Cardiac septum (tissue), 1 donor: ENCODE measurements at regions of chr1 and their contacts with region 1.

Region 1: GRCh38 chr1:16366722-16367257 is at the start of gene SZRD1:
- DNase-seq: peak; percentile 98
- total RNA-seq, gene SZRD1: 101 TPM

Region 2: GRCh38 chr1:16067127-16067768 is 299.5 kb before region 1 on chr1:
- intact Hi-C with region 1: no loop called
- DNase-seq: no peak

Region 3: DNA sequence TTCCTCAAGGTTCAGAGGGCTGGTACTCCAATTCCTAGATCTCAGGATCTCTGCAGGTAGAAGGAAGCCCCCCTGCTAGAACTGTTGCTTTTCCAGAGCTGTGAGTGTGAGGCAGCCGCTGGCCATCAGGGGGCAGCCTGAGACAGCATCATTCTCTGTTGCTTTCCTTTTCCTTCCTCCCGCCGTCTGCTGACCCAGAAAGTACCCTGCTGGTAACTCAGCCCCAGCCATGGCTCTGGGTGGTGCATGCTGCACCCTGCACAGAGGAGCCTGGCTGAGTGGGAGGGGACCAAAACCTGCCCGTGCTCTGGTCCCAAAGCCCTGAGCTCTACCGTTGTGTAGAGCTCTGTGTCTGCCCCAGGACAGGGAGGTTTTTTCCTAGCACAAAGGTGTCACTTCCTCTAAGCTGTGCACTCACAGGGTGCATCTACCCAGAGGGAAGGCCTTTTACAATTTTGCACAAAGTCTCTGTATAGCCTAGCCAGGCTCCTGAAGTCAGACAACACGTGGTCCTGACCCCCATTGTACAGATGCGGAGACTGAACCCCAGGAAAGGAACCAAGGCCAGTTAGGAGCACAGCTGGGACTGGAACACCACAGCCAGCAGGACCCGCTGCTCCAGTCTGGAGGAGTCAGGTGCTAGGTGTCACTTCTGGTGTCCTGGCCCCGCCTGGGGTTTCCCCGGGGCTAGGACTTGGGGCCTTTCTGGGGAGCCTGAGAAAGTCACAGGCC is 287.7 kb before region 1 on chr1:
- intact Hi-C with region 1: loop called (anchors 2 kb)
- DNase-seq: no peak

Region 4: DNA sequence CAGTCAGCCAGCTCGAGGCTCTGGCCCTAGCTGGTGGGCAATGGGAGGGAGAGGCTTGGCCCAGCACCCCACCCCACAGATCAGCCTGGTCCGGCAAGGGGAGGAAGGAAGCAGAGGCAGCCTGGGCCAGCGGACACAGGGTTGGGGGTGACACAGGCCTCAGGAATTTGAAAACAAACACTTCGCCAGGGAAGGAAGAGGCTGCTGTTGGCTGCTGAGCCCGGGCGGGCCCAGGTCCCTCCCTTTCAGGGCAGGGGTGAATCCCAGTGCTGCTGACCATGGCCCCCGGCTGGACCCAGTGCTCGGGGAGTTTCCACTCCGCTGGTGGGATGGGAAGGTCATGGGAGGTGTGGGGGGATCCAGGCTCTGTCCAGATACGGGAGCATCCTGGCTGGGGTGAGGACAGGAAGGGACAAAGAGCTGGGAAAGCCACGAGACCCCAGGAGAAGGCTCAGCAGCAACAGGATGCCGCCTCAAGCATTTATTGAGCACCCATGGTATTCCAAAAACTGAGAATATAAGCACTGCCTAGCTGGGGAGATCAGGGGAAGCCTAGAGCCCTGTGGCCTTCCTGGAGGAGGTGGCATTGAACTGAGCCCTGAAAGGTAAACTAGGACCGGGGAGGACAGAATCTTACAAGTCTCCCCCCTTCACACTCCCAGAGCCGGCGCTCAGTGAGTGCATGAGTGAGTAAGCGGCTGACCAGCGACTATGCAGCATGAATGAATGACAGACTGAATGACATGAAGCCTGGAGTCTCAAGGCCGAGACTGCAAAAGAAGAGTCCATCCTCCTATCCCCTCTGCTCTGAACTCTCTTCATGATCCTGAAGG is 184.7 kb before region 1 on chr1:
- intact Hi-C with region 1: loop called (anchors 5 kb)
- DNase-seq: peak; percentile 92

Region 5: DNA sequence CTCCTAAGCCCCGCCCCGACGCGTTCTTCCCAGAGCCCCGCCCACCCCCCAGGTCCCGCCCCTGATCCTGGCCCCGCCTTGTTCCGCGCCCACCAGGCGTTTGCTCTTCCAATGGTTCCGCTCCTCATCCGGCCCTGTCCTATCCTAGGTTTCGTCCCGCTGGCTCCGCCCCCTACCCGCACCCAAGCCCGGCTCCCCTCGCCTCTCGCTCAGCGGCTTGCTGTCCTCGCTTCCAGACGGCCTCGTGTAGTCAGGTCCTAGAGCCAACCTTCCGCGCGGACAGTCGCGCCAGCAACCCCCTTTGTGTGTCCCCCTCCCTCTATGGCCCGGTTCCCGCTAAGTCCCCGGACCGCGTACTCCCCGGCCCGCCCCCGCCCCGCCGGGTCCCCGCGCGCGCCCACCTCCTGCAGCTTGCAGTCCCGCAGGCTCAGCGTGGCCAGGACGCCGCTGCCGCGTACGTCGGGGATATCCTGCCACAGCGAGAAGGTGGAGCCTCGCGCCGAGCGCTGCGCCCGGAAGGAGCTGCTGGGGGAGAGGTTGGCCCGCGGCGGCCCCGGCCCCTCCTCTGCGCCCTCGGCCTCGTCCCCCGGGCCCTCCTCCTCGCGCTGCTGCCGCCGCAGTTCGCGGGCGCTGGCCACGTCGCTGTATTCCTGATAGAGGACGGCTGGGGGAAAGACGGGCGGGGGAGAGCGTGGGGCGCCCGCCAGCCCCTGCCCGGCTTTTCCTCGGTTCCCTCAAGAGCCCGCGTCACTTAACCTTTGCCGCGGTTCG is 160.1 kb before region 1 on chr1:
- intact Hi-C with region 1: loop called (anchors 5 kb)
- DNase-seq: peak; percentile 97

Region 6: DNA sequence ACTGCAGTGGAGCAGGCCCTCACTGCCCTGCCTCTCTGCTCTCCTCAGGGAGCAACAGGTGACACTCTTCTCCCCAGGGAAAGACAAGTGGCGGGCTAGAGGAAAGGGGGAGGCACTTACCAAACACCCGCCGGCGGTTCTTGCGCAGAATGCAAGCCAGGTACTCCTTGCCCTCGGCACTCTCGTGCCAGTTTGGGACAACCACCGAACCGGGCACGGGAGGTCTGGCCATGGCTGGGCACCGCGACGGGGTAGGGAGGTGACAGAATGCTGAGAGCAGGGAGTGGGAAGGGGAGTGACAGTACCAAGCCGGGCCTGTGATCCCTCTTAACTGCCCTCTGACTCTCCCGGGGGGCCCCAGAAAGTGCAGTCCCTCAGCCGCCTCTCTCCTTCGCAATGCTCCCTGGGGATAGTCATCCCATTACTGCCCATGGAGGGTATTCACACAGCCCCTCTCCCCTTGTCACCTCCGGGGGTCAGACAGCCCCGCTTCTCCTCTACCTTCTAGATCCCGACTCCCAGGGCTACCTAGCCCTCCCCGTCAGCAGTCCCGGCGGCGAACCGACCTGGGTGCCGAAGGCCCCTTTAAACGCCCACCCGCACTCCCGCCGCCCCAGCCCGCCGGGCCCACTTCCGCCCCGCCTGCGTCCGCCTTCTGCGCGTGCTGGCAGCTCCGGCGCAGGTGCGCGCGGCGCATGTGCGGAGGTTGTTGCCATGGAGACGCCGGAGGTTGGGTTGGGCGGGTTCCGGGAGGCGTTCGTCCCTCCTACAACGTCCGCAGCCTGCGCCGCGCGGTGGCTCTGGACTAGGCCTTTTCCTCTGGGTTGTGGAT is 130.1 kb before region 1 on chr1 and contains the start of gene CPLANE2:
- intact Hi-C with region 1: loop called (anchors 2 kb)
- DNase-seq: peak; percentile 97
- total RNA-seq, gene CPLANE2: 10.6 TPM

Region 7: GRCh38 chr1:16351994-16352841 is 14.6 kb before region 1 on chr1 and contains the start of gene FBXO42:
- intact Hi-C with region 1: loop called (anchors 2 kb)
- DNase-seq: peak; percentile 96
- total RNA-seq, gene FBXO42: 14.1 TPM

Region 8: DNA sequence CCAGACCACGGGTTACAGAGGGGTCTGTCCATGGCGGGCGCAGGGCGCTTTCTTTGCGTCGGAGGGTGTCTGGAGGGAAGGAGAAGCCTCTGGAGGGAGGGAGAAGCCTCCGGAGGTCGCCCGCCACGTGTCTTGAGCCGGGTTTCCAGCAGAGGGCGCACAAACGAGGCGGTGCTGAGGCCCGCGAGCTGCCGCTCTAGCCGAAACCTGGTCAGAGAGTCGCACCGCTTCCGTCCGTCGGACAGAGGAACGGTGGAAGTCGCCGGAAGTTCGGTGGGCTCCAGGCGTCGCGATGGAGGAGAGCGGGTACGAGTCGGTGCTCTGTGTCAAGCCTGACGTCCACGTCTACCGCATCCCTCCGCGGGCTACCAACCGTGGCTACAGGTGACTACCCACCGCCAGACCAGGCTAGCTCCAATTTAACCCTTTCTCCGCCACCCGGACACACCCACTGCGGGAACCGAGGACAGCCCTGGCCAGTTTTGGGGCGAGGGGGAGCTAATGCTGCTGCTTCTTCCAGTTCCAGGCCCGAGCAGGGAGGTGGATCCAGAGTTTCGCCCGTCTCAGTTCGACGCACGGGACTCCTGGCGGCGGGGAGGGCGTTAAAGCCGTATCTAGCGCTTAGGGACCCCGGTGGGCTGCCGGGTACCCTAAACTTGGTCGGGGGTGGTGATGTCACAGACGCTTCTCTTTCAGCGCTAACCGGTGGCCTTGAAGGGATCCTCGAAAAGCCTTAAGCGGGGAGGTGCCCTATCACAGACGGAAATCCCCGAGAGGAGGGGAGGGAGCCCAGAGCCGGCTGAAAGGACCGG is 73.9 kb after region 1 on chr1 and contains the start of gene NECAP2:
- intact Hi-C with region 1: loop called (anchors 1 kb)
- DNase-seq: peak; percentile 97
- total RNA-seq, gene NECAP2: 14.5 TPM